CD14-positive monocyte (primary cell): ENCODE measurements at regions of chr16 and their contacts with region 1.

Region 1: DNA sequence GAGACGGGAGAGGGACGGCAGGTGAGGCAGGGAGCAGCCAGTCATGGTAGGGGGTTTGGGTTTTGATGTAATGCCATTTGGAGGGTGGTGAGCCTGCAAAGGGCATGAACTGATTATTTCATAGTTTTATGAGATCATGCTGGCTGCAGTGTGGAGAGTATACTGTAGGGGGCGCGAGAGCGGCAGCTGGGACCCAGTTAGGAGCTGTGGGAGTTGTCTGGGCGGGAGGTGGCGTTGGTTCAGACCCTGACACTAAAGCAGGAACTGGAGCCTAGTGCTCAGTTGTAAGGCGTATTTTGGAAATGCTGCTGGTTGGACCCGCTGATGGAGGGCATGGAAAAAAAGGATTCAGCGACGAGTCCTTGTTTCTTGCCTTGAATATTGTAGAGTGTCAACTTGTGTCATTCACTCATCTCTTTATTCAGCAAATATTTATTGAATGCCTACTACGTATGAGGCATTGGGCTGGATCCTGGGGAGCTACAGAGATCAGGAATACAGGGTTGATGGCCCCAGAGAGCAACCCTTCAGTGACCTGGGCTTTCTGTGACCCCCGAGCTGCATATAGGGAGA is 23.7 kb upstream of the KDM8 start:
- DNase-seq: peak; percentile 79 to 82 (median 81)
- H3K4me3 ChIP-seq: no peak overlapping the region
- H3K4me3 Mint-ChIP-seq: no peak overlapping the region
- H3K27ac ChIP-seq: no peak overlapping the region
- H3K27ac Mint-ChIP-seq: no peak overlapping the region
- H3K4me1 ChIP-seq: peaks cover 6 to 14% of the 10 kb centered on the region in 2 donors
- H3K4me1 Mint-ChIP-seq: peaks cover 14% of the 10 kb centered on the region
- H3K27me3 ChIP-seq: no peaks in the 10 kb centered on the region
- H3K27me3 Mint-ChIP-seq: peaks cover 4 to 9% (median 7%) of the 10 kb centered on the region in 3 donors
- CTCF ChIP-seq: peak; percentile 89

Region 2: DNA sequence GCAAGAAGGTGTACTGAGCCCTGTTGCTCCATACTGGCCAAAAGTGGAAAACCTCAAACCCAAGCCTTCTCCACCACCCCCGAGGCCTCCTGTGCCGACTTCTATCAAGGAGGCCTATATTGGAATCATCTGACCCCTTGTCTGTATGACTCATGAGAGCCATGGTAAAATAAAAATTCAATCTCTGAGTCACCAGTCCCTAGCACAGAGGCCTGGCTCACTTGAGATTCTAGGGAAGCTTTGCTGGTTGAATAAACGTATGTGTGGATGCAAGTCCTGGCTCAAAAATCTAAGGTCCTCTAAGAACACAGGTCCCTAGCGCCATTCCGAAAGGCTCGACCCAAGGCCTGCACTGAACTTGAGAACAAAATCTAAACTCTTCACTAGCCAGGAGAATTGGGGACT is 73.9 kb after region 1 on chr16:
- intact Hi-C with region 1: no loop called
- DNase-seq: peak in 1 of 3 donors; percentile 42
- H3K4me3 ChIP-seq: no peak overlapping the region
- H3K4me3 Mint-ChIP-seq: no peak overlapping the region
- H3K27ac ChIP-seq: no peak overlapping the region
- H3K27ac Mint-ChIP-seq: peak overlapping the region in 1 of 7 donors; percentile 32
- H3K4me1 ChIP-seq: no peaks in the 10 kb centered on the region
- H3K4me1 Mint-ChIP-seq: peaks cover 5% of the 10 kb centered on the region
- H3K27me3 ChIP-seq: no peaks in the 10 kb centered on the region
- H3K27me3 Mint-ChIP-seq: peaks cover 0 to 3% (median 0%) of the 10 kb centered on the region in 3 donors
- CTCF ChIP-seq: no peak

Region 3: DNA sequence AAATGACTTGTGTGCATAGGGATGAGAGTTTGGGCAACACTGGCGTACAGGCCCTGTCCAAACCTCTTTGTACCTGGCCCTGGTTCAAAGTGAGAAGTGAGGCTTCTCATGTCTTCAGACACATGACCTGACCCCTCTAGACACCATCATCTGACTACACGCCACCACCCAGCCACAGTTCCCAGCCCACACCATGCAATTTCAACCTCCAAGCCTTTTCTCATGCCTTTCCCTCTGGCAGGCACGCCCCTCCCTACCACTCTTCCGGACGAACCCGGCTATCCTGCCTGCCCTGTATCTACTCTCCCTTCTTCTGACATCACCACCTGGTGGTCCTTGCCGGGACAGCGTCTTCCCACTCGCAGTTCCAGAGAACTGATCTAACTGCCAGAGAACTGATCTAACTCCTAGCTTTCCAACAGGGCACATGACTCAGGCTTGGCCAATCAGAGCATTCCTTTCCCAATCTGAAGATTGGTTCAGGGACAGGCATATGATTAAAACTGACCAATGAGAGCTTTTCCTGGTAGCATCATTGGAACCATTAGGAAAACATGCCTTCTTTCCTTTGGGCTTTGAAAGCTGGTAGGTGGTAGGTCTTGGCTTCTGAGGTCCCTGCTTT is 195.3 kb after region 1 on chr16:
- intact Hi-C with region 1: loop called in 1 of 2 experiments (anchors 5 kb)
- DNase-seq: peak; percentile 53 to 76 (median 70)
- H3K4me3 ChIP-seq: peak overlapping the region in 2 of 3 experiments; percentile 13 to 58
- H3K4me3 Mint-ChIP-seq: no peak overlapping the region
- H3K27ac ChIP-seq: peak overlapping the region; percentile 84 to 87
- H3K27ac Mint-ChIP-seq: no peak overlapping the region
- H3K4me1 ChIP-seq: peaks cover 63 to 69% of the 10 kb centered on the region in 2 donors
- H3K4me1 Mint-ChIP-seq: peaks cover 27% of the 10 kb centered on the region
- H3K27me3 ChIP-seq: no peaks in the 10 kb centered on the region
- H3K27me3 Mint-ChIP-seq: peaks cover 0 to 6% (median 5%) of the 10 kb centered on the region in 3 donors
- CTCF ChIP-seq: peak; percentile 51